ENCODE measurements at regions of chr12 and their contacts with region 1.

Region 1: DNA sequence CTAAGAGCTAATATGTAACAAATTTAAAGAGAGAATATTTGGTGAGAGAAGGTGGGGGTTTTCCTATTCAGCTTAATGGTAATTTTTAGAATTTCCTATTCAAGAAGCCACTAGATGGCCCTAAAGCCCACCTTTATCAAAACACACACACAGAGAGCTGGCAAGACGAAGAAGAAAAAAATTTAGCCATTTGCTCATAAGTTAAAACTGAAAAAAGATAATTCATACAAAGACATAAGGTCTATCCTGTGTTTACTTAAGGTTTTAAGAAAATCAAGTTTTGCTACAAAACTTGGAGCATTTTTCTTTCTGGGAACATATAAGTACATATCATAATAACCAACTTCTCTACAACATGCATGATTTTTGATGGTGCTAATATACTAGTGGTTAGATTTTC is 46.8 kb upstream of the PCED1B start:
- DNase-seq: peak in 3 of 9 experiments; percentile 13 to 82 (median 74)
- ATAC-seq: peak; percentile 72
- H3K4me3 ChIP-seq: no peak overlapping the region
- H3K4me3 Mint-ChIP-seq: no peak overlapping the region
- H3K27ac ChIP-seq: no peak overlapping the region
- H3K27ac Mint-ChIP-seq: no peak overlapping the region
- H3K4me1 ChIP-seq: peaks cover 5% of the 10 kb centered on the region
- H3K4me1 Mint-ChIP-seq: peaks cover 29% of the 10 kb centered on the region
- H3K27me3 ChIP-seq: no peaks in the 10 kb centered on the region
- H3K27me3 Mint-ChIP-seq: no peaks in the 10 kb centered on the region
- CTCF ChIP-seq: peak; percentile 74

Region 2: DNA sequence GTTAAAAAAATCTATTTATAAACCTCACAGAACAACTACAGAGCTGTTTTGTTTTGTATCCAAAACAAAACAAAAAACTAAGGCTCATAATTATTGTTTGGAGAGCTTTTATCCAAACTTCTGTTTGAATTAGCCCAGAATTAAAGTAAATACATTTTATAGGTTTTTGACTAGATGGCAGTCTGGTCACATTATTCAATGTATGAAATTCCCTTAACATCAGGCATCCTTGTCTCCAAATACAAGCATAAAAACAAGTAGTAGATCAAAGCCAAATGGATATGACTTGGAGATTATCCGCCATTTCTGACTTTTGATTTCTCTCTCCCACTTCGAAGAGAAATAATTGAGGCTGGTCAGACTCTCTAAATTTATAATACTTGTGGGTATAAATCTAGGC is 827.4 kb before region 1 on chr12:
- CTCF ChIA-PET with region 1: no interaction called
- POLR2A ChIA-PET with region 1: no interaction called
- intact Hi-C with region 1: no loop called
- DNase-seq: no peak
- ATAC-seq: no peak
- H3K4me3 ChIP-seq: no peak overlapping the region
- H3K4me3 Mint-ChIP-seq: no peak overlapping the region
- H3K27ac ChIP-seq: no peak overlapping the region
- H3K27ac Mint-ChIP-seq: peak overlapping the region; percentile 10
- H3K4me1 ChIP-seq: peaks cover 38% of the 10 kb centered on the region
- H3K4me1 Mint-ChIP-seq: peaks cover 63% of the 10 kb centered on the region
- H3K27me3 ChIP-seq: no peaks in the 10 kb centered on the region
- H3K27me3 Mint-ChIP-seq: no peaks in the 10 kb centered on the region
- CTCF ChIP-seq: no peak

Region 3: GRCh38 chr12:47021298-47021697 is 11.3 kb before region 1 on chr12:
- CTCF ChIA-PET with region 1: interaction called, 26 read pairs
- POLR2A ChIA-PET with region 1: no interaction called
- intact Hi-C with region 1: no loop called
- DNase-seq: peak in 3 of 9 experiments; percentile 11 to 70 (median 58)
- ATAC-seq: no peak
- H3K4me3 ChIP-seq: no peak overlapping the region
- H3K4me3 Mint-ChIP-seq: no peak overlapping the region
- H3K27ac ChIP-seq: no peak overlapping the region
- H3K27ac Mint-ChIP-seq: no peak overlapping the region
- H3K4me1 ChIP-seq: no peaks in the 10 kb centered on the region
- H3K4me1 Mint-ChIP-seq: no peaks in the 10 kb centered on the region
- H3K27me3 ChIP-seq: no peaks in the 10 kb centered on the region
- H3K27me3 Mint-ChIP-seq: peaks cover 16% of the 10 kb centered on the region
- CTCF ChIP-seq: peak; percentile 75

Region 4: GRCh38 chr12:47190271-47190750 is 157.7 kb after region 1 on chr12:
- CTCF ChIA-PET with region 1: interaction called, 14 read pairs
- POLR2A ChIA-PET with region 1: no interaction called
- intact Hi-C with region 1: loop called (anchors 2 to 5 kb)
- DNase-seq: peak in 1 of 9 experiments; percentile 25
- ATAC-seq: no peak
- H3K4me3 ChIP-seq: no peak overlapping the region
- H3K4me3 Mint-ChIP-seq: peak overlapping the region; percentile 63
- H3K27ac ChIP-seq: peak overlapping the region in 1 of 2 experiments; percentile 69
- H3K27ac Mint-ChIP-seq: peak overlapping the region; percentile 89
- H3K4me1 ChIP-seq: peaks cover 85% of the 10 kb centered on the region
- H3K4me1 Mint-ChIP-seq: peaks cover 88% of the 10 kb centered on the region
- H3K27me3 ChIP-seq: no peaks in the 10 kb centered on the region
- H3K27me3 Mint-ChIP-seq: no peaks in the 10 kb centered on the region
- CTCF ChIP-seq: no peak

Region 5: DNA sequence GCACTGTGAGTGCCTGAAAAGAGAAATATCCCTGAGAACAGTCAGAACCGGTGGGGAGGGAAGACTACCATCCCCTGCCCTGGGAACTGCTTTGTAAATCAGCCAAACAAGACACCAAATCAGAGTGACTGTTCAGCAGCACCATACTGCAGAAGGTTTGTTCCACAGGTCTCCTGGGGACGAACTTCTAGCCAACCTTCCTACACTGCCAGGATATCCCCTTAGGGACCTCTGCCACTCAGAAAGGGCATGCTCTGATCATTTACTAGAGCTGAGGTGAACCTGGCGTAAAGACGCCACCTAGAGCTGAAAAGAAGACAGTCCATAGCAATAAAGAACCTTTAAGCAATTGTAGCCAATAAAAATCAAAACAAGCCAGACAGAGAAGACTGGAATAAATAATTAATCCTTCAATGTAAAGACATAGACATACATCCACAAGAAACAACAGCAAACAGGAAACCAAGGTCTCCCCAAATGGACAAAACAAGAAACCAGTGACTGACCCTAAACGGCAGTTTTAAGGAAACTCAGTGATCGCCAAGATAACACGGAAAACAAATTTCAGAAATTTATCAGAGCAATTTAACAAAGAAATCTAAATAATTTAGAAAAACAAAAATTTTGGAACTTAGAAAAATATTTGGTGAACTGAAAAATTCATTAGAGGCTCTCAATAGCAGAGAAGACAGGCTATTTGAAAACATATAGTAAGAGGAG is 275.2 kb after region 1 on chr12:
- CTCF ChIA-PET with region 1: interaction called, 15 read pairs
- POLR2A ChIA-PET with region 1: interaction called, 4 read pairs
- intact Hi-C with region 1: loop called (anchors 1 kb)
- DNase-seq: peak; percentile 21 to 81 (median 56)
- ATAC-seq: peak; percentile 91
- H3K4me3 ChIP-seq: peak overlapping the region; percentile 37 to 46
- H3K4me3 Mint-ChIP-seq: peak overlapping the region; percentile 81
- H3K27ac ChIP-seq: peak overlapping the region; percentile 21 to 25
- H3K27ac Mint-ChIP-seq: peak overlapping the region; percentile 88
- H3K4me1 ChIP-seq: peaks cover 12% of the 10 kb centered on the region
- H3K4me1 Mint-ChIP-seq: peaks cover 47% of the 10 kb centered on the region
- H3K27me3 ChIP-seq: no peaks in the 10 kb centered on the region
- H3K27me3 Mint-ChIP-seq: no peaks in the 10 kb centered on the region
- CTCF ChIP-seq: peak; percentile 60

Region 6: DNA sequence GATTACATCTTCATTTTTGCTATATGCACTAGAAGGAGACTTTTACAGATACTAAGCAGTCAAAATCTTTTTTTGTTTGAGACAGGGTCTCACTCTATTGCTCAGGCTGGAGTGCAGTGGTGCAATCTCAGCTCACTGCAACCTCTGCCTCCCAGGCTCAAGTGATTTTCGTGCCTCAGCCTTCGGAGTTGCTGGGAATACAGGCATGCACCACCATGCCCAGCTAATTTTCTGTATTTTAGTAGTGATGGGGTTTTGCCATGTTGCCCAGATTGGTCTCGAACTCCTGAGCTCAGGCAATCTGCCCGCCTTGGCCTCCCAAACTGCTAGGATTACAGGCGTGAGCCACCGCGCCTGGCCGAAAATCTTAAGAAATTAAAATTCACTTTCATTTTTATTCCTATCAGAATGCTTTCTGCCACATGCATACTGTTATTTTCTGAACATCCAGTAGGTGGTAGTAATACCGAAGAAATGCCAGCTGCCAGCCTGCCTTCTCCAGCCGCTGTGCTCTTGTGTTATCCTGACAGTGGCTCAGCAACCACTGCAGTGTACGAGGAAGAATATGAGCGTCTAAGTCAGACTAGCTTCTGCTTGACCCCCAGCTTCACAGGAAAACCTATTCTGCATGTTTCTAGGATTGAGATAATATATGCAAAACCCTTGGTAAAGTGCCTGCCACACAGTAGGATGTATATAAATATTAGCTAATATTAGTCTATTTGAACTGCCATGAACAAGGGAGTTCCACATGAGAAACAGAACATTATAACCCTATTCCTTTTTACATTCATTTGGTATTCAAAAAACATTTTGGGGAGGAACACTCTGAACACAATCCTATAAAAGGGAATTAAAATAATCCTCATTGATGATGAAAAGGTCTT is 619.0 kb after region 1 on chr12:
- CTCF ChIA-PET with region 1: interaction called, 17 read pairs
- POLR2A ChIA-PET with region 1: no interaction called
- intact Hi-C with region 1: loop called (anchors 2 to 10 kb)
- DNase-seq: peak in 7 of 9 experiments; percentile 29 to 73 (median 42)
- ATAC-seq: peak; percentile 96
- H3K4me3 ChIP-seq: no peak overlapping the region
- H3K4me3 Mint-ChIP-seq: peak overlapping the region; percentile 64
- H3K27ac ChIP-seq: no peak overlapping the region
- H3K27ac Mint-ChIP-seq: peak overlapping the region; percentile 19
- H3K4me1 ChIP-seq: peaks cover 9% of the 10 kb centered on the region
- H3K4me1 Mint-ChIP-seq: peaks cover 16% of the 10 kb centered on the region
- H3K27me3 ChIP-seq: no peaks in the 10 kb centered on the region
- H3K27me3 Mint-ChIP-seq: no peaks in the 10 kb centered on the region
- CTCF ChIP-seq: peak; percentile 90

Measured in CD8-positive, alpha-beta T cell (primary cell).